ENCODE measurements at regions of chr3 and their contacts with region 1.

Region 1: DNA sequence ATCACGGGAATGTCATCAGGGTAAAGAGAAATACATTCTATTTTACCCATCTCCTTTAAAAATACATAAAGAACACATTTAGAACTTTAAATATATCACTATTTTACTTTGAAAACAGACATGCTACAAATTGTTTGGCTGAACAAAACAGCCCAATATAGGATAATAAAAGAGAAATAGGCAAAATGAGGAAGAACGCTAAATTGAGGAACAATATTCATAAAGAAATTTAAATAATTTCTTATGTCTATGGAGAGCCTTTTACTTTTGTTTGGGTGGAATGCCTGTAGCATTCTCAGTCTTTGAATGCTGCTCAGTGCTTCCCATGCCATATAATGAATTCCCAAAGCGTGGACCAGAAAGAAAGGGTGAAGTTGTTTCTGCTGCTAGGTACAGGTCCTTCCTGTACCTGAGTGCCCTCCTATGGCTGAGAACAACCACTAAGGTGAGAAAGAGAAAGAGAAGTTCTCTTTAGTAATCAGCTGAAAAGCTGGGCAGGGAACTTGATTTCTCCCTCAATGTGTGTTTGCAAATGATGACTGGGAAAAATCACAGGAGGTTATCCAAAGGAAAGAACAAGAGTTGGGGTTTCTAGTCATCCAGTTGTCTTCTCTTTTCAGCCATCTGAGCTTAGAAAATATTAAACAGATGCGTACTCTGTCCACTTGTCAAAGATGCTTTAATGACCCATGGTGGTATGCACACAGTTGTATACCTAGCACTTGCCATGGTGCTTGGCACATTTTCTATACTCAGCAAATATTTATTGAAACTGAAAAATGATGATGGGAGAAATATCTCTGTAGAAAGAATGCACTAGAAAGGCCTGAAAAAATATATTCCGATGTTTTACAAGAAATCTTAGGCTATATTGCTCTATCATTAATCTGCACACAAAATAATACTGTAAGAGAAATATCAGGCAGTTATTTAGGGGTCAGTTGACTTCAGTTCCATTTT is 404.6 kb downstream of the TIGIT start:
- DNase-seq: no peak
- H3K4me3 Mint-ChIP-seq: no peak overlapping the region
- H3K27ac Mint-ChIP-seq: no peak overlapping the region
- H3K4me1 Mint-ChIP-seq: no peaks in the 10 kb centered on the region
- H3K27me3 Mint-ChIP-seq: no peaks in the 10 kb centered on the region
- CTCF ChIP-seq: no peak

Region 2: DNA sequence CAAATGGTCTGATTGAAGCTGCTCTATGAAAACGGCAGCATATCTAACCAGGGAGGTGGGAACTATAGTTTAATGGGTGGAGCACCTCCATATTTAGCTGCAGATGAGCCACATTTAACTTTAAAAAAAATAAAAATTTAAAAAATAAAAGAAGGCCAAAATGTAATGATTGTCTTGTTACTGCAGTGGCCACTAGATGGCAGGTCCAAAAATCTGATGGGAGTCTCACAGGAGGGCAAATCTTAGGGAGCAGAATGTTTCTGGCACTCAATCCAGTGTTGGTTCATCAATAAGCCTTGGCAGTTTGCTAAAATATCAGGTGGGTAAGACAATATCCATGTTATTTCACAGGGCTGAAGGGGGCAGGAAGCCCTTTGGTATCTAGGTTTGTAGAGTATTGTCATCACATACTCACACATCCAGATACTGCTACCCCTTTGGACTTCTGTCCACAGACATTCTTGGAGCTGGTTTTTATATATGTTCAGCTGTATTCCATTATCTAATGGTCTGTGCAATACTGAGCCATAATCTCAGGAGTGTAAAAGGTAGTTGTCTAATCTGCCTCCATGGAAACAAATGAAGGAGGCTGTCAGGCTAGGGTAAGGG is 171.3 kb before region 1 on chr3:
- CTCF ChIA-PET with region 1: no interaction called
- intact Hi-C with region 1: loop called (anchors 1 kb)
- DNase-seq: peak; percentile 10
- H3K4me3 Mint-ChIP-seq: no peak overlapping the region
- H3K27ac Mint-ChIP-seq: no peak overlapping the region
- H3K4me1 Mint-ChIP-seq: no peaks in the 10 kb centered on the region
- H3K27me3 Mint-ChIP-seq: no peaks in the 10 kb centered on the region
- CTCF ChIP-seq: peak; percentile 70

Region 3: DNA sequence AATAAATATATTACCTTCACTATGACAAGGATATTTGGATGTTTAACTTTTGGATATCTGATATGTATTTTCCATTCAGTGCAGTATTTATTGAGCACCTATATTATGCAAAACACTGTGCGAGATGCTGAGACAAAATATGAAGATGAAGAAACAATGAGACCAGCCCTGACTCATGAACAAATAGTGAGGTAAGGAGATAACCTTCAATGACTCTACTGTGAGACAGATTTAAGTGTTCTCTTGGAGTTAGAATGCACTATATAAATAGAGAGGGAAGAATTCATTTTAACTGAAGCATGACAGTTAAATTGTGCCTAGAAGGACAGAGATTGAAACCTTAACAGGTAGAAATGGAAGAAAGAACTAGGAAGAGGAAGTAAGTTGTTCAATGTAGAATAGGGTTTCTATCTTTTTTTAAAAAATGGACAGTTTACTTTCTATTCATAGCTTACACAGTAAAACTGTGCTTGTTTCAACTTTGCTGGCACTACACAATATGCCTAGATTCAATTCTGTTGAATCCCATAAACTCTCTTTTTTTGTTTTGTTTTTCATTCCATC is 324.5 kb after region 1 on chr3:
- CTCF ChIA-PET with region 1: no interaction called
- intact Hi-C with region 1: no loop called
- DNase-seq: no peak
- H3K4me3 Mint-ChIP-seq: no peak overlapping the region
- H3K27ac Mint-ChIP-seq: no peak overlapping the region
- H3K4me1 Mint-ChIP-seq: no peaks in the 10 kb centered on the region
- H3K27me3 Mint-ChIP-seq: no peaks in the 10 kb centered on the region
- CTCF ChIP-seq: no peak

Measured in Calu3 (cell line).